GM18951 (cell line): ENCODE measurements at regions of chr2 and their contacts with region 1.

Region 1: GRCh38 chr2:9799665-9800632 is 43.3 kb upstream of the TAF1B start:
- POLR2A ChIP-seq: no peak

Region 2: GRCh38 chr2:9573840-9574239 is 226.1 kb before region 1 on chr2:
- in situ Hi-C with region 1: no loop called
- POLR2A ChIP-seq: no peak

Region 3: DNA sequence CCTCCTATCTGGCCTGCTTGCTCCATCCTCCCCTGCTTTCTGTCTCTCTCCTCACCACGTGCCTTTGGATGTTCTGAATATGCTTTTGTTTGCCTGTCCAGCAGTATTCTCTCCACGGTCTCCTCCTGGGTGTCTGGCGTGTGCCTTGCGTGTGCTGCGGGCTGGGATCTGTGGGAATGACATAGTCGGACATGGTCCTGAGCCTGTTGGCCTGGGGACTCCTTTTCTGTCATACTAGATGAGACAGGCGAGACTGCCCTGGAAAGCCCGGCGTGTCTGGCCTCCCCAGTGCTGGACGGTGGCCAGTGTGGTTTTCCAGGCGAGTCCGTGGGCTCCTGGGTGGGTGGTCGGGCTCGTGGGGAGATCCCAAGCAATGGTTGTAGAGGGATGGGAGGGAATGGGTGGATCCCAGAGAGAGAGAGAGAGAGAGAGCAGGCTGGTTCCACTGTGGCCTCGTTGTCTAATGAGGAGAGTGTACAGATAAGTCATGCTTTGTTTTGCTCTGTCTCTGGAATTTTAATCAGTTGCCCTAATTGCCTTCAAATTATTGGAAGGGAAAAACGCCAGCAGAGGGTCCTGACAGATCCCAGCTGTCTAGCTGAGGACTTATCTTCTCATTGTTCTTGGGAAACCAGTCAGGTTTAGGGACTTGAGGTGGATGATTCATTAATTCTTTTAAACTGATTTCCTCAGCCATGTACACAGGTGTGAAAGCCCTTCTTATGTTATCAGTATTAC is 561.1 kb after region 1 on chr2:
- in situ Hi-C with region 1: no loop called
- POLR2A ChIP-seq: no peak

Region 4: GRCh38 chr2:10448208-10448645 is 648.3 kb after region 1 on chr2 and contains the start of gene ODC1:
- in situ Hi-C with region 1: loop called (anchors 25 kb)
- POLR2A ChIP-seq: peak; percentile 98